HEK293 (cell line): ENCODE measurements at regions of chr5 and their contacts with region 1.

Region 1: GRCh38 chr5:103475629-103476240 is 86.9 kb downstream of the NUDT12 start:
- H3K4me3 ChIP-seq: no peak overlapping the region
- H3K27ac ChIP-seq: no peak overlapping the region
- H3K4me1 ChIP-seq: no peaks in the 10 kb centered on the region
- CTCF ChIP-seq: no peak

Region 2: GRCh38 chr5:102583276-102584124 is 892.2 kb before region 1 on chr5:
- CTCF ChIA-PET with region 1: interaction called, 10 read pairs
- POLR2A ChIA-PET with region 1: no interaction called
- H3K4me3 ChIP-seq: no peak overlapping the region
- H3K27ac ChIP-seq: no peak overlapping the region
- H3K4me1 ChIP-seq: no peaks in the 10 kb centered on the region
- CTCF ChIP-seq: peak; percentile 61

Region 3: DNA sequence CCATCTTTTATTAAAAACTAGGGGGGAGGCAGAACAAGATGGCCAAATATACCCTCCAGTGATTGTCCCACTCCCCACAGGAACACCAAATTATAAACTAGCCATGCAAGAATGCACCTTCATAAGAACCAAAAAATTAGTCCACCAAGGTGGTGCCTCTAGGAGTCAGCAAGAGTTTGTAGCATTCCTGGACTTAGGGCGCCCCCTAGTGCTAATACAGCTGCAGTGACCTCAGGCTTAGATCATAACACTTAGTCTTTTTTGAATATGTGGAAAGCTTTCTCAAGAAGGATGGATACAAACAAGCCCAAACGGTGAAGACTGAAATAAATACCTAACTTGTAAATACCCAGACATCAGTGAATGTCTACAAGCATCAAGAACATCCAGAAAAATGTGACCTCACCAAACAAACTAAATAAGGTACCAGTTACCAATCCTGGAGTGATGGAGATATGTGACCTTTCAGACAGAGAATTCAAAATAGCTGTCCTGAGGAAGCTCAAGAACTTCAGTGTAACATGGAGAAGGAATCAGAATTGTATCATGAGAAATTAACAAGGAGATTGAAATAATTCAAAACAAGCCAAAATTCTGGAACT is 336.4 kb before region 1 on chr5:
- CTCF ChIA-PET with region 1: interaction called, 15 read pairs
- POLR2A ChIA-PET with region 1: no interaction called
- H3K4me3 ChIP-seq: no peak overlapping the region
- H3K27ac ChIP-seq: no peak overlapping the region
- H3K4me1 ChIP-seq: no peaks in the 10 kb centered on the region
- CTCF ChIP-seq: peak; percentile 53; the same call in 1 of the 2 replicates

Region 4: GRCh38 chr5:103224118-103224893 is 251.4 kb before region 1 on chr5:
- CTCF ChIA-PET with region 1: interaction called, 10 read pairs
- POLR2A ChIA-PET with region 1: no interaction called
- H3K4me3 ChIP-seq: no peak overlapping the region
- H3K27ac ChIP-seq: no peak overlapping the region
- H3K4me1 ChIP-seq: no peaks in the 10 kb centered on the region
- CTCF ChIP-seq: no peak

Region 5: GRCh38 chr5:103232393-103232999 is 243.2 kb before region 1 on chr5:
- CTCF ChIA-PET with region 1: interaction called, 34 read pairs
- POLR2A ChIA-PET with region 1: no interaction called
- H3K4me3 ChIP-seq: no peak overlapping the region
- H3K27ac ChIP-seq: no peak overlapping the region
- H3K4me1 ChIP-seq: no peaks in the 10 kb centered on the region
- CTCF ChIP-seq: no peak

Region 6: DNA sequence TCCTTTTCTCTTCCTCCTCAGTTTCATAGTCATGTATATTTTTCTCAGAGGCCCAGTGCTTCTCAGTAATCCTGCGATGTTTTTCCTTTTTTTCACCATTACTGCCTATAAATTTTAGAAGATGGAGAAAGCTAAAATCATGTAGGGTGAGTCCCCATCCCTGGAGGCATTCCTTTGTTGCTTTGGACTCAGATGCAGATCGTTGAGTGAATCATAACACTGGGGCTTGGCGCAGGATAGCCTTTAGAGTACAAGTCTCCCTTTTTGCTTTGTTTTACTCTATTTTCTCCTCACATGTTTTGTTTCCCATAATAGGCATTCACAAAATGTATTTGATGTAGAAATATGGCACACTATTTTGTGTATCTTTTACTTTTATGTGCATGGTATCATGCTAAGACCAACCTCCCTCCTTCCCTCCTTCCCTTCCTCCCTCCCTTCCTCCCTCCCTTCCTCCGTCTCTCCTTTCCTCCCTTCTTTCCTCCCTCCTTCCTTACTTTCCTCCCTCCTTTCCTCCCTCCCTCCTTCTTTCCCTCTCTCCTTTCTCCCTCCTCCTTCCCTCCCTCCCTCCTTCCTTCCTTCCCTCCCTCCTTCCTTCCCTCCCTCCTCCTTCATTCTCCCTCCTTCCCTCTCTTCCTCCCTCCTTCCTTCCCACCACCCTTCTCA is 14.5 kb after region 1 on chr5:
- CTCF ChIA-PET with region 1: no interaction called
- POLR2A ChIA-PET with region 1: no interaction called
- H3K4me3 ChIP-seq: no peak overlapping the region
- H3K27ac ChIP-seq: no peak overlapping the region
- H3K4me1 ChIP-seq: no peaks in the 10 kb centered on the region
- CTCF ChIP-seq: no peak